AG04449 (cell line): ENCODE measurements at regions of chr19 and their contacts with region 1.

Region 1: GRCh38 chr19:55653758-55654539 is 886 bp upstream of the U2AF2 start:
- DNase-seq: peak; percentile 96
- H3K4me3 ChIP-seq: peak overlapping the region; percentile 68
- CTCF ChIP-seq: peak; percentile 100

Region 2: GRCh38 chr19:55643348-55644176 is 10.4 kb before region 1 on chr19 and contains the start of gene ZNF581:
- CTCF ChIA-PET with region 1: interaction called, 16 read pairs
- POLR2A ChIA-PET with region 1: interaction called, 11 read pairs
- DNase-seq: no peak
- H3K4me3 ChIP-seq: peak within 1 kb of the TSS; percentile 74
- CTCF ChIP-seq: no peak

Region 3: GRCh38 chr19:55670280-55671053 is 16.5 kb after region 1 on chr19:
- CTCF ChIA-PET with region 1: interaction called, 32 read pairs
- POLR2A ChIA-PET with region 1: interaction called, 7 read pairs
- DNase-seq: no peak
- H3K4me3 ChIP-seq: no peak overlapping the region
- CTCF ChIP-seq: no peak